Activated naive CD4-positive, alpha-beta T cell treated with anti-CD3 and anti-CD28 coated beads for 36 hours (primary cell): ENCODE measurements at regions of chr16 and their contacts with region 1.

Region 1: DNA sequence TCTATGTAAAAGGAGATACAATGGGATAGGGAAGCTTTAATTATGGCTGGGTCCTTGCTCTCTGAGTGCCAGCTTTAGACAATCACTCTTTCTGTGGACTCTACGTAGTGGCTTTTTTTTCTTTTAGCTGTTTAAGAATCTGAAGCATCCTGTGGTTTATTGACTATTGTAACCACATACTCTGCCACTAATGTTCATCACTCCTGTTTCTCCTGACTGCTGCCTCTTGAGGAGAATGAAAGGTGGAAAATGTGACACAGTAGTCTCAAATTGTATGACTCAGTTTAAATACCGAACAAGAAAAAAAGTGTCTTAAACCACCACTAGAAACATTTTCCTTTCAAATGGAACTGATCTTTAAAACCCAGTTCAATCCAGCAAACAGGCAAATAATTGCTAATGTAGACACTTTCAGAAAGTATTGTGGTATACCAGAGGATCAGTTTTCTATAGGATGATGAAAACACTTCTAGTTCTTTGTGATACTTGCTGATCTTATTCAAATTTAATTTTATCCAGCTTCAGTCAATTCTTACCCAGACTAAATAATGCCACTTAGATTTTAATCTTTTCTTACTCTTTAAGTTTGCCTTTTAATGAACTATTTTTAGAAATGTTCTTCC is 302.7 kb upstream of the PMFBP1 start:
- DNase-seq: peak; percentile 10
- H3K4me3 Mint-ChIP-seq: no peak overlapping the region
- H3K27ac Mint-ChIP-seq: no peak overlapping the region
- H3K4me1 Mint-ChIP-seq: peaks cover 14% of the 10 kb centered on the region
- H3K27me3 Mint-ChIP-seq: no peaks in the 10 kb centered on the region

Region 2: GRCh38 chr16:72787514-72788268 is 313.1 kb after region 1 on chr16:
- CTCF ChIA-PET with region 1: no interaction called
- intact Hi-C with region 1: loop called (anchors 5 kb)
- DNase-seq: peak; percentile 82
- H3K4me3 Mint-ChIP-seq: peak overlapping the region; percentile 72
- H3K27ac Mint-ChIP-seq: peak overlapping the region; percentile 21
- H3K4me1 Mint-ChIP-seq: peaks cover 14% of the 10 kb centered on the region
- H3K27me3 Mint-ChIP-seq: peaks cover 28% of the 10 kb centered on the region